MCF 10A (cell line): ENCODE measurements at regions of chr4 and their contacts with region 1.

Region 1: DNA sequence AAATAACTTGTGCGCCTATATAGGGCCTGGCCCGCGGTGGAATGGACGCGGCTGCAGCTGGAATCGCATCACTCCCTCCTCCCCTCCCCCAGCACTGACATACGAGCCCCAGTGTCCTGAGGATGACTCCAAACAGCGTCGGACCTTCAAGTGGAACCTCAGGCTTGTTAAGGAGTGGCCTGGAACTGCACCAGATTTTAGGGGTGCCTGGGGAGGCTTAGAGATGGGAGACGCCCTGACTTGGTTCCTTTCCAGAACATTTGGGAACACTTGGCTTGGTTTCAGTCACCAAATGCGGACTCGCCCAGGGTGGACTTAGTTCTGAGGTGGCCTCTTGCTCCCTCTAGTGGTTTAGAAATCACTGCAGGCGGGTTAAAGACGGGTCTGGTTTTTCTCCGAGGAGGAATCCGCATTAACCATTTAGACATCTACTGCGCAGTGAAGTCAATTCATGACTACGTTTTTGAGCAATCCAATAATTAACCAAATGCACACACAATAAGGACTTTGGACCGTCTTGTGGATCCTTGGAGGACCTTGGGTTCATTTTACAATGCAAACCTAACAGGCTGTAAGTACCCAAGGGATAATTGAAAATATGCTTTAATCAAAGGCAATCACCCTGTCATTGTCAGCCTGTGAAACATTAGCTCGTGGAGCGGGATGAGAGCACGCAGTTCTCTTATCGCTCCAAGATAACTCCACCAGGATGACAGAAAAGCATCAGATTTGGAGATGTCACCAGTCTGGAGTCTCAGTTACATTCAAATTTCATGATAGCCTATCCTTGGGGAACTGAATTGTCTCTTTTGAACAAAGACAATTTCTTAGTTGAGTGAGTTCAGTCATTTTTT is 11.2 kb upstream of the PDGFRA start:
- DNase-seq: peak; percentile 91
- H3K4me3 Mint-ChIP-seq: peak overlapping the region; percentile 40
- H3K27ac Mint-ChIP-seq: no peak overlapping the region
- H3K4me1 Mint-ChIP-seq: peaks cover 14% of the 10 kb centered on the region
- H3K27me3 Mint-ChIP-seq: no peaks in the 10 kb centered on the region
- CTCF ChIP-seq: peak; percentile 77

Region 2: DNA sequence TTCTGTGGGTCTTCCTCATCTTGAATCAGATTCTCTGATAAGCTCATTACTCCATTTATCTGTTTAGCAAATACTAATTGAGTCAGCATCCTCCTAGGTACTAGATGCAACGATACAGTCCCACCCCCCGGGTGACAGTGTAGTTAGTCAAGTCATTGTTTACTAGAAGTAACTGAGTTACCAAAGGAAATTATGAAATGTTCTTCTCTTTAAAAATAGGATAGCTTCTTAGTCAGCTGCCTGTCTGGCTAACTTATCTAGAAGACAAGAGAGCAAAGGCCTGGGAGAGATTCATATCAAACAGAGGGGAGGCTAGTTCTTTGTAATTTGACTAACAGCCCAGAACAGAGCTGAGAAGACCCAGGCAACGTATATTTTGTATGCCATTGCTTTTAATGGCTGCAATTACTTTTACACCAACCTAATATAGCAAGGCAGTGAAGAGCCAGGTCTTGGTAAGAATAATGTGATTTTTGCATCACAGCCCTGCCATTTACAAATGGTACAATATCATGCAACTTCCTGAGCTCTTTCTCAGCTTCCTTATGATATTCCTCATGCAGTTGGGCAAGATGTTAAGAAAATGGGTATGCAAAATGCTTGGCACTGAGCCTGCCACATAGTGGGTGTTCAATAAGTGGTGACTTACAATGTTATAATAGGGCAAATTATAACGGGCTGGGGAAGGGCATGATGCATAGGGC is 303.4 kb before region 1 on chr4:
- CTCF ChIA-PET with region 1: interaction called, 154 read pairs
- POLR2A ChIA-PET with region 1: interaction called, 3 read pairs
- intact Hi-C with region 1: no loop called
- DNase-seq: peak; percentile 81
- H3K4me3 Mint-ChIP-seq: no peak overlapping the region
- H3K27ac Mint-ChIP-seq: peak overlapping the region; percentile 64
- H3K4me1 Mint-ChIP-seq: peaks cover 53% of the 10 kb centered on the region
- H3K27me3 Mint-ChIP-seq: no peaks in the 10 kb centered on the region
- CTCF ChIP-seq: no peak

Region 3: DNA sequence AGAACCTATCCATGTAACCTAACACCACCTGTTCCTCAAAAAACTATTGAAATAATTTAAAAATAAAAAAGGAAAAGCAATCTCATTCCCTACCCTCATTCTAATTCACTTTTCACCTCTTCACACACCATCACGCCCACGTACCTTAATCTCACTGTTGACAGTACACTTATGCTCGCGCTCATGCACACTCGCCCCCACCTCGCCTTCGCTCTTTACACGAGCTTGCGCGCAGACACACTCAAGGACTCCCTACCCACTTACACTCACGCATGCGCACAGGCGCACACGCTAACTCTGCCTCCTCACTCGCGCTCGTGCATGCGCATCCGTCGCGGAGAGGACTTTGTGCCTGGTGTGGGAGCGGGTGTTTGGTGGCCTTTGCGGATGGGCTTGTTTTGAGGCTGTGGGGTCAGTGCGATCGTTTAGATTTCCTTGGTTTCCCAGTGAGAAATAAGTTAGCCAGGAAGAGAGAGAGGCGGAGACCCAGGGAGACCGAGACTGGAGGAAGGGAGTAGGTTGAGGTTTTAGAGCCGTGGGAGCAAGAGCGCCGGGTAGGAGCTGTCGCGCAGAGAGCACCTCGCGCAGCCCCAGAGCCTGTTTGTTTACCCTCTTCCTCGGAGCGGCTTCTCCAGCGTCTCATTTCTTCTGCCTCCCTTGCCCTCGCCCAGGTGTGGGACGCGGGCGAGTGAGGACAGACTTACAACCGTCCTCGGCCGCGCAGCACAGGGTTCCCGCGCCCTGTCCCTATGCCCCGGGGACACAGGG is 126.0 kb before region 1 on chr4:
- CTCF ChIA-PET with region 1: interaction called, 6 read pairs
- POLR2A ChIA-PET with region 1: no interaction called
- intact Hi-C with region 1: loop called (anchors 5 kb)
- DNase-seq: peak; percentile 62
- H3K4me3 Mint-ChIP-seq: peak overlapping the region; percentile 74
- H3K27ac Mint-ChIP-seq: peak overlapping the region; percentile 2
- H3K4me1 Mint-ChIP-seq: peaks cover 9% of the 10 kb centered on the region
- H3K27me3 Mint-ChIP-seq: peaks cover 6% of the 10 kb centered on the region
- CTCF ChIP-seq: no peak

Region 4: GRCh38 chr4:54228056-54228527 is 10.2 kb after region 1 on chr4:
- CTCF ChIA-PET with region 1: interaction called, 35 read pairs
- POLR2A ChIA-PET with region 1: no interaction called
- intact Hi-C with region 1: no loop called
- DNase-seq: peak; percentile 71
- H3K4me3 Mint-ChIP-seq: peak overlapping the region; percentile 78
- H3K27ac Mint-ChIP-seq: no peak overlapping the region
- H3K4me1 Mint-ChIP-seq: peaks cover 6% of the 10 kb centered on the region
- H3K27me3 Mint-ChIP-seq: peaks cover 26% of the 10 kb centered on the region
- CTCF ChIP-seq: peak; percentile 85